ENCODE measurements at regions of chr13 and their contacts with region 1.

Region 1: DNA sequence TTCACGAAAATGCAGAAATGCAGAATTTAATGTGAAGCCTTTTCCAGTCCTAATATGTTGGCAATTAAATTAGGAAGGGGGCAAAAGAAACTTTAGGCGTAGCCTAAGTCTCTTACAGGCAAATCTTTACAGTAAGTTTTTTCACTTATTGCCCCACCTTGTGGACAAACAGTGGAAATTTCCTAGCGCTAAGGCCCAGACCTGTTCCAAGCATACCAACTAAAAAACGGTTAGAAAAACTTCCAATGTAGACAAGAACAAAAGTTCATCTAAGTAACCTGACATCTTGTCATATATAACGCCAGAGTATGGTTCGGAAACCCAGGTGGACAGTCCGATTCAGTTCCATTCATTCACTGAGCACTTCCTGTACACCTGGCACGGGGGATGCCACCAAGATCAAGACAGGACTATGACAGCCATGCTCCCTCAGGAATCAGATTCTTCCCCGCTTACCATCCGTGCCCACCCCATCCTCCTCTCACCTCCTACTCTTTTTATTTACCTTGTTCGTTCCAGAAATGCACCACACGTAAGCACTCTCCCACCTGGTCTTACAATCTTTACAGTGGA is 4.9 kb downstream of the ZAR1L start:
- DNase-seq: no peak
- ATAC-seq: peak; percentile 56
- H3K4me3 Mint-ChIP-seq: peak overlapping the region; percentile 13
- H3K27ac Mint-ChIP-seq: no peak overlapping the region
- H3K4me1 Mint-ChIP-seq: peaks cover 18% of the 10 kb centered on the region
- H3K27me3 Mint-ChIP-seq: no peaks in the 10 kb centered on the region
- CTCF ChIP-seq: no peak

Region 2: GRCh38 chr13:31431722-31432137 is 878.5 kb before region 1 on chr13:
- CTCF ChIA-PET with region 1: no interaction called
- POLR2A ChIA-PET with region 1: no interaction called
- intact Hi-C with region 1: loop called (anchors 5 kb)
- DNase-seq: no peak
- ATAC-seq: peak; percentile 37
- H3K4me3 Mint-ChIP-seq: no peak overlapping the region
- H3K27ac Mint-ChIP-seq: no peak overlapping the region
- H3K4me1 Mint-ChIP-seq: no peaks in the 10 kb centered on the region
- H3K27me3 Mint-ChIP-seq: peaks cover 5% of the 10 kb centered on the region
- CTCF ChIP-seq: peak; percentile 48

Region 3: GRCh38 chr13:31824705-31825517 is 485.3 kb before region 1 on chr13:
- CTCF ChIA-PET with region 1: no interaction called
- POLR2A ChIA-PET with region 1: no interaction called
- intact Hi-C with region 1: loop called (anchors 1 kb)
- DNase-seq: no peak
- ATAC-seq: no peak
- H3K4me3 Mint-ChIP-seq: no peak overlapping the region
- H3K27ac Mint-ChIP-seq: no peak overlapping the region
- H3K4me1 Mint-ChIP-seq: no peaks in the 10 kb centered on the region
- H3K27me3 Mint-ChIP-seq: peaks cover 3% of the 10 kb centered on the region
- CTCF ChIP-seq: no peak

Region 4: GRCh38 chr13:32019612-32020233 is 290.5 kb before region 1 on chr13:
- CTCF ChIA-PET with region 1: no interaction called
- POLR2A ChIA-PET with region 1: no interaction called
- intact Hi-C with region 1: loop called (anchors 1 kb)
- DNase-seq: no peak
- ATAC-seq: peak; percentile 85
- H3K4me3 Mint-ChIP-seq: no peak overlapping the region
- H3K27ac Mint-ChIP-seq: no peak overlapping the region
- H3K4me1 Mint-ChIP-seq: no peaks in the 10 kb centered on the region
- H3K27me3 Mint-ChIP-seq: no peaks in the 10 kb centered on the region
- CTCF ChIP-seq: no peak

Region 5: DNA sequence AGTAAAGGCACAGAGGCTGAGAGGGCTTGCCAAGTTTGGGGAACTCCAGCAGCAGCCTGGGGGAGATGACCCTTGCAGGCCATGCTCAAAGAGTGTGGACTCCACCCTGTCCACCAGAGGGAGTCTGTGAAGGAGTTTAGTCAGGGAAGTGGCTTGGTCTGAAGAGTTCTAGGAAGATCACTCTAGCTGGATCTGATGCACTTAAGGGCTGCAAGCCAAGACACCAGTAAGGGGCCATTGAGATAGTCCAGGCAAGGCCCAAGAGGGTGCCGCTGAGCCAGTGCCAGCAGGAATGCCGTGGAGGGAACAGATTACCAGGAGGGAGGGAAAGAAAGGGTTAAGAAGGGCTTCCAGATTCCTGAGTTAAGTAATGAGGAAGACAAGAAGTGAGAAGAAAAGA is 63.8 kb before region 1 on chr13:
- CTCF ChIA-PET with region 1: no interaction called
- POLR2A ChIA-PET with region 1: interaction called, 3 read pairs
- intact Hi-C with region 1: loop called (anchors 1 kb)
- DNase-seq: no peak
- ATAC-seq: peak; percentile 67
- H3K4me3 Mint-ChIP-seq: no peak overlapping the region
- H3K27ac Mint-ChIP-seq: no peak overlapping the region
- H3K4me1 Mint-ChIP-seq: no peaks in the 10 kb centered on the region
- H3K27me3 Mint-ChIP-seq: no peaks in the 10 kb centered on the region
- CTCF ChIP-seq: no peak

Region 6: GRCh38 chr13:32267836-32268439 is 42.3 kb before region 1 on chr13:
- CTCF ChIA-PET with region 1: no interaction called
- POLR2A ChIA-PET with region 1: no interaction called
- intact Hi-C with region 1: loop called (anchors 1 kb)
- DNase-seq: peak; percentile 22
- ATAC-seq: peak; percentile 93
- H3K4me3 Mint-ChIP-seq: no peak overlapping the region
- H3K27ac Mint-ChIP-seq: no peak overlapping the region
- H3K4me1 Mint-ChIP-seq: no peaks in the 10 kb centered on the region
- H3K27me3 Mint-ChIP-seq: no peaks in the 10 kb centered on the region
- CTCF ChIP-seq: peak; percentile 67